Adrenal gland (tissue), 19 donors: ENCODE measurements at regions of chr3 and their contacts with region 1.

Region 1: DNA sequence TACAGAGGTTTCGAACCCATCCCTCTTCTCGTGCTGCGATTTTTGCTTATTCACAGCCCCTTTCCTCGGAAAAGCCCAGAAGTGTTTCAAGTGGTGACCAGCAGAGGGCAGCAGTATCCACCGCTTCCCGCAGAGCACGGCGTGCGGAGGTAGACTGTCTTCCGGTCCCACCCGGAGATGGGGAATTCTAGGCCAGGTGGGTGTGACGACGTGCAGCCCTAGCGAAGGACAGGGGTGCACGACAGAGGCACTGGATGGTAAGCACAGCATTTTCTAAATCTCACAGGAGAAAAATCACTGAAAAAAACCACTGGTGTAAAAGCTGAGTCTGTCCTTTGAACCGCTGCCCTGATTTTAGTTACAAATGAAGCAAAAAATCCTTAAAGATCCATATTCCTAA is 7.4 kb upstream of the PSMD6 start:
- DNase-seq: peak; percentile 56 to 82 (median 71)
- H3K4me3 ChIP-seq: peak overlapping the region in 1 of 4 donors; percentile 39
- H3K27ac ChIP-seq: no peak overlapping the region
- H3K4me1 ChIP-seq: peaks cover 0 to 10% of the 10 kb centered on the region in 2 donors
- H3K27me3 ChIP-seq: peaks cover 4% of the 10 kb centered on the region
- CTCF ChIP-seq: peak; percentile 76 to 95 (median 92)
- POLR2A ChIP-seq: no peak

Region 2: DNA sequence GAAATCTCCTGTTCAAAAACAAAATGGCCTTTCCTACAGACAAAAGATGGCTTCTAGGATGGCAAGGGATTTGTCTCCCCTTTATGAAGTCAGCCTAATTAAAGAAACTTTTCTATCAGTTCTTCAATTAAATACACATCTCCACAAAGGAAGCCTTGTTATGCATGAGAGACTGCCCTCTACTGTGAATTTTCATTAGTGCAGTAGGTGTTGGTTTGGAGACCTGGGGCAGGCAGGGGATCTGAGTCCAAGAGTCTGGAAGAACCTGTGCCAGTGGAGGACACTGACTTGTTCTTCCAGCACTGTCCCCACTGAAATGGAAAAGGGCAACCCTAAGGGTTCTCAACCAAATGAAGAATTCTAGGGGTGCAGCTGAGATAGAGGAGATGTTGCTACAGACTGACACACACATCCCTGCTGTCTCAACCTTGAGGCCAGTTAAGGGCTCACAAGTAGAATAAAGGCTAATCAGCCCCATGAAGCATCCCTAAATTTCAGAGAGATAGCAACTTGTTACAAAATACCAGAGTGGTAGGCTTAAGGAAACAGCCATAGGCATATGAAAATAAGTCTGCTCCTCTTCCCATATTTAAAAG is 368.6 kb after region 1 on chr3:
- intact Hi-C with region 1: loop called (anchors 2 to 5 kb)
- DNase-seq: peak; percentile 20 to 60 (median 52)
- H3K4me3 ChIP-seq: no peak overlapping the region
- H3K27ac ChIP-seq: no peak overlapping the region
- H3K4me1 ChIP-seq: no peaks in the 10 kb centered on the region
- H3K27me3 ChIP-seq: no peaks in the 10 kb centered on the region
- CTCF ChIP-seq: peak; percentile 59 to 85 (median 78)
- POLR2A ChIP-seq: no peak

Region 3: GRCh38 chr3:64484289-64484992 is 453.7 kb after region 1 on chr3:
- intact Hi-C with region 1: loop called in 1 of 2 experiments (anchors 2 kb)
- DNase-seq: peak; percentile 76 to 94 (median 82)
- H3K4me3 ChIP-seq: no peak overlapping the region
- H3K27ac ChIP-seq: no peak overlapping the region
- H3K4me1 ChIP-seq: no peaks in the 10 kb centered on the region
- H3K27me3 ChIP-seq: no peaks in the 10 kb centered on the region
- CTCF ChIP-seq: peak; percentile 79 to 92 (median 88)
- POLR2A ChIP-seq: no peak